Adrenal gland (tissue), 19 donors: ENCODE measurements at regions of chr11 and their contacts with region 1.

Region 1: DNA sequence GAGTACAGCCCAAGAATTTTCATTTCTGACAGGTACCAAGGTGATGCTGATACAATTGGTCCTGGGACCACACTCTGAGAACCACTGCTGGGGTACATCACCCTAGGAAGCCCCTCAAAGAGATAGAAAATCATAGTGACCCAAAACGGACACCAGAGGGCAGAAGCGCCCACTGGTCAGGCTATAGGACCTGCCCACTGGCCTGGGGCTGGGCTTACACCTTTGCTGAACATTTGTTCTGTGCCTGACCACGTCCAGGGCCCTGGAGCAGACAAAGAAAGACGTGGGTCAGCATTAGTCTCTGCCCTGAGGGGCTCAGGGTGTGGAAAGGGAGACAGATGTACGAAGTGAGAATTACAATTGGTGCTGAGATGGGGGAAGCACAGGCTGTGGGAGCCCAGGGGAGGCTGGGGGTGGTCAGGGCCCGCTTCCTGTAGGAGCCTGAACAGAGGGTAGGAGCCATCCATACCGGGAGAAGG is 14.4 kb upstream of the SERPINH1 start:
- DNase-seq: peak; percentile 69 to 88 (median 77)
- H3K4me3 ChIP-seq: no peak overlapping the region
- H3K27ac ChIP-seq: no peak overlapping the region
- H3K4me1 ChIP-seq: peaks cover 0 to 7% of the 10 kb centered on the region in 2 donors
- H3K27me3 ChIP-seq: no peaks in the 10 kb centered on the region
- CTCF ChIP-seq: peak; percentile 80 to 96 (median 89)
- POLR2A ChIP-seq: no peak

Region 2: GRCh38 chr11:75371941-75372789 is 175.5 kb before region 1 on chr11:
- intact Hi-C with region 1: no loop called
- DNase-seq: no peak
- H3K4me3 ChIP-seq: no peak overlapping the region
- H3K27ac ChIP-seq: no peak overlapping the region
- H3K4me1 ChIP-seq: peaks cover 0 to 4% of the 10 kb centered on the region in 2 donors
- H3K27me3 ChIP-seq: no peaks in the 10 kb centered on the region
- CTCF ChIP-seq: no peak
- POLR2A ChIP-seq: no peak

Region 3: DNA sequence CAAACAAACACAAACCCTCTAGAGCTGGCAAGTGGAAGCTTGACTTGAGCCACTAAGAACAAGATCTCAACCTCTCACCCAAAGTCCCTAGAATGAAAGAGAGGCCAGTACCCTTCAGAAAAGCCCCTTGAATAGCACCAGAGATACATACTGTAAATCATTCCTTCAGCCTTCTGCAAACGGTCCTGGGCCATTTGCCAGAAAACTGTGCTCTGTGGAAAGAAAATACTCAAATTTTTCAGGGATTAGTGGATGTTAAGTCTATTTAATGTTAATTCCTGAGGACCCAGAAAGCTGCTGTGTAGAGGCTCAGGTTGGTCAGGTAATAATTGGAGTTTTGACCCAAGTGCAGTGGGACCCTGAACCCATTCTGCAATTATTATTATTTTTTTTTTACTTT is 31.4 kb after region 1 on chr11:
- intact Hi-C with region 1: loop called in 1 of 2 experiments (anchors 2 kb)
- DNase-seq: no peak
- H3K4me3 ChIP-seq: no peak overlapping the region
- H3K27ac ChIP-seq: no peak overlapping the region
- H3K4me1 ChIP-seq: peaks cover 7 to 28% of the 10 kb centered on the region in 2 donors
- H3K27me3 ChIP-seq: no peaks in the 10 kb centered on the region
- CTCF ChIP-seq: no peak
- POLR2A ChIP-seq: no peak